Transverse colon (tissue), 4 donors: ENCODE measurements at regions of chr4 and their contacts with region 1.

Region 1: DNA sequence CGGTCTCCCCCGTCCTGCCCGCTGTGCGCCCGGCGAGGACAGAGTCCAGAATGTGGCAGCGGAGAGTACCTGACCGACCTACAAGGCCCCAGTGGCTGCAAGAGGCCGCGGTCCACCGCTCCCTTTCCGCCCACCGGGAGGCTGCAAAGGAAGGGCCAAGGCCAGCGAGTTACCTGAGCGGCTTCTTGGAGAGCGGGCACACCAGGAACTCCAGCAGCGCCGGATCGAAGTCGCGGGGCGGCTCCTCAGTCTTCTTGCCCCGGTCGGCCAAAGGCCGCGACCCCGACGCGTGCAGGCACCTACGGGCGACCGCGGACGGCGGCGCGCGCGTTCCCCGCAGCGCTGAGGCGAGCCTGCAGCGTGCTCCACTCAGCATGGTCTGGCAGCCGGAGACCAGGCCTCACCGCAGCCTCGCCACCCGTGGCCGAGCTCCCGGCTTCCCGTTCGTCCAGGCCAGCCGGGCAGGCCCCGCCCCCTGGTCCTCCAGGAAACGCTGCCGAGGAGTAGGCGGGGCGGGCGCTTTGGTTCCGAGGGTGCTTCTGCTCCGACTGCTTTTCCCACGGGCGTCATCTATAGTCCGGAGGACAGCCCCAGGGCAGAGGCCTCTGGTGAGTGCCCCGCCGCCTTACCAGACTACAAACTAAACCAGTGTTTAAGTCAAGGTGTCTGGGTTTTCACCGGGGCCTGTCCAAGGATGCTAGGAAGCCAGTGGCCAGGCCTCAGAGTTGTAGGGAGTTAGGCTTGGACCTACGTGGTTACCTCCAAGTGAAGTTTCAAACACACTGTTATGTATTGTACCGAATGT is at the start of gene PYURF:
- DNase-seq: peak; percentile 97
- H3K4me3 ChIP-seq: peak within 1 kb of the TSS; percentile 51 to 92 (median 83)
- H3K27ac ChIP-seq: peak within 1 kb of the TSS; percentile 91 to 96 (median 94)
- H3K4me1 ChIP-seq: peaks cover 5 to 29% (median 9%) of the 10 kb centered on the region in 4 donors
- H3K27me3 ChIP-seq: no peaks in the 10 kb centered on the region
- CTCF ChIP-seq: no peak
- EP300 ChIP-seq: no peak
- POLR2A ChIP-seq: peak; percentile 75
- total RNA-seq, gene PYURF: 50.4 to 77.1 (median 63.8) TPM

Region 2: DNA sequence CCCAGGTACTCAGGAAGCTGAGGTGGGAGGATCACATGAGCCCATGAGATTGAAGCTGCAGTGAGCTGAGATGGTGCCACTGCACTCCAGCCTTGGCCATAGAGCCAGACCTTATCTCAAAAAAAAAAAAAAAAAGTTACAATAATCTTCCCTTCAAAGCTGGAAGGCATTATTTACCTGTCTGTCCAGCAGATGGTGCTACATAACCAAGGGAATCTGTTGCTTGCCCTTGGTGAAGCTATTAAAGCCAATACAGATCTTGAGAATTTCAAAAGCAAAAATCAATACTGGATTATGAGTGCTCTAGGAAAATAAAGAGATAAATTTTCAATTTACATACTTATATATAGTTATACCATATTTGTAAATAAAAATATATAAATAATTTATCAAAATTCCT is 490.2 kb before region 1 on chr4:
- in situ Hi-C with region 1: loop called (anchors 10 to 25 kb)
- intact Hi-C with region 1: no loop called
- DNase-seq: peak; percentile 25
- H3K4me3 ChIP-seq: no peak overlapping the region
- H3K27ac ChIP-seq: no peak overlapping the region
- H3K4me1 ChIP-seq: peaks cover 0 to 3% (median 0%) of the 10 kb centered on the region in 4 donors
- H3K27me3 ChIP-seq: no peaks in the 10 kb centered on the region
- CTCF ChIP-seq: peak; percentile 63 to 70 (median 65)
- EP300 ChIP-seq: no peak
- POLR2A ChIP-seq: no peak

Region 3: GRCh38 chr4:88352062-88352740 is 171.3 kb before region 1 on chr4:
- in situ Hi-C with region 1: loop called in 1 of 4 experiments (anchors 25 kb)
- intact Hi-C with region 1: no loop called
- DNase-seq: no peak
- H3K4me3 ChIP-seq: no peak overlapping the region
- H3K27ac ChIP-seq: no peak overlapping the region
- H3K4me1 ChIP-seq: no peaks in the 10 kb centered on the region
- H3K27me3 ChIP-seq: no peaks in the 10 kb centered on the region
- CTCF ChIP-seq: no peak
- EP300 ChIP-seq: no peak
- POLR2A ChIP-seq: no peak

Region 4: DNA sequence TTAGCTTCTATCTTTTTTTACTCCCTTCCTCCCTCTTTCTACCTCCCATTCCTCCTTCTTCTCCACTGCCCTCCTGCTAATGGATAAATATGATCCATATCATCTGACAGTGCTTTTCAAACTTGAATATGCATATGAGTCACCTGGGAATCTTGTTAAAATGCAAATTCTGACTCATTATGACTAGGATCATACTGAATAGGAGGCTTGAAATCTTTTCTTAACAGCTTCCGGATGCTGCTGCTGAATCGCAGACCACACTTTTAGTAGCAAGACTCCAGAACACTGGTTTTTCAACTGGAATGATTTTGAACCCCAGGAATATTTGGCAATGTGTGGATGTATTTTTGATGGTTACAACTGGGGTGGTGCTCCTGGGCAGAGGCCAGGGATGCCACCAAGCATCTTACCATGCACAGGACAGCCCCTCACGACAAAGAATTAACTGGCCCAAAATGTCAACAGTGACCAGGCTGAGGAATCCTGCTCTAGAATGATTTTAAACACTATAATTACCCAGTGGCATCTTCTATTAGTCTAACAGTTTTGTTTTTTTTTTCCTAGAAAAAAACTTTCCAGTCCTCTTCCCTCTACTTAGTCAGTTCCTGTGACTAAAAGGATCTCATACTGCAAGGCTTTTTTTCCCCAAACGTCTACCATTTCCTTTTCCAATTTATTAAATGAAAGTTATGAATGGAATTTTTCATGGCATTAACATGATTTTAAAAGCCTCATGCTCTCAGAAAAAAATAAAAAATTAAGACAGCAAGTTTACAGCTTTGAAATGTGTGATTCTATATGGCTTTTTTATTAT is 10.6 kb after region 1 on chr4:
- in situ Hi-C with region 1: no loop called
- intact Hi-C with region 1: loop called (anchors 1 kb)
- DNase-seq: no peak
- H3K4me3 ChIP-seq: no peak overlapping the region
- H3K27ac ChIP-seq: no peak overlapping the region
- H3K4me1 ChIP-seq: no peaks in the 10 kb centered on the region
- H3K27me3 ChIP-seq: no peaks in the 10 kb centered on the region
- CTCF ChIP-seq: no peak
- EP300 ChIP-seq: no peak
- POLR2A ChIP-seq: no peak

Region 5: GRCh38 chr4:88659055-88659889 is 135.7 kb after region 1 on chr4:
- in situ Hi-C with region 1: loop called in 1 of 4 experiments (anchors 25 kb)
- intact Hi-C with region 1: no loop called
- DNase-seq: peak; percentile 45
- H3K4me3 ChIP-seq: no peak overlapping the region
- H3K27ac ChIP-seq: peak overlapping the region; percentile 5 to 73 (median 50)
- H3K4me1 ChIP-seq: peaks cover 0 to 21% (median 11%) of the 10 kb centered on the region in 4 donors
- H3K27me3 ChIP-seq: no peaks in the 10 kb centered on the region
- CTCF ChIP-seq: peak; percentile 71 to 76 (median 75)
- EP300 ChIP-seq: no peak
- POLR2A ChIP-seq: no peak

Region 6: GRCh38 chr4:88823058-88823919 is 299.8 kb after region 1 on chr4:
- in situ Hi-C with region 1: loop called in 1 of 4 experiments (anchors 25 kb)
- intact Hi-C with region 1: no loop called
- DNase-seq: peak; percentile 90
- H3K4me3 ChIP-seq: peak overlapping the region; percentile 29 to 59 (median 44)
- H3K27ac ChIP-seq: peak overlapping the region; percentile 94 to 96 (median 96)
- H3K4me1 ChIP-seq: peaks cover 13 to 44% (median 28%) of the 10 kb centered on the region in 4 donors
- H3K27me3 ChIP-seq: no peaks in the 10 kb centered on the region
- CTCF ChIP-seq: no peak
- EP300 ChIP-seq: peak; percentile 34
- POLR2A ChIP-seq: peak; percentile 94

Region 7: GRCh38 chr4:89029591-89029990 is 506.1 kb after region 1 on chr4:
- in situ Hi-C with region 1: loop called in 2 of 4 experiments (anchors 25 kb)
- intact Hi-C with region 1: no loop called
- DNase-seq: no peak
- H3K4me3 ChIP-seq: no peak overlapping the region
- H3K27ac ChIP-seq: no peak overlapping the region
- H3K4me1 ChIP-seq: peaks cover 0 to 7% (median 0%) of the 10 kb centered on the region in 4 donors
- H3K27me3 ChIP-seq: no peaks in the 10 kb centered on the region
- CTCF ChIP-seq: no peak
- EP300 ChIP-seq: no peak
- POLR2A ChIP-seq: no peak